ENCODE measurements at regions of chr3 and their contacts with region 1.

Region 1: DNA sequence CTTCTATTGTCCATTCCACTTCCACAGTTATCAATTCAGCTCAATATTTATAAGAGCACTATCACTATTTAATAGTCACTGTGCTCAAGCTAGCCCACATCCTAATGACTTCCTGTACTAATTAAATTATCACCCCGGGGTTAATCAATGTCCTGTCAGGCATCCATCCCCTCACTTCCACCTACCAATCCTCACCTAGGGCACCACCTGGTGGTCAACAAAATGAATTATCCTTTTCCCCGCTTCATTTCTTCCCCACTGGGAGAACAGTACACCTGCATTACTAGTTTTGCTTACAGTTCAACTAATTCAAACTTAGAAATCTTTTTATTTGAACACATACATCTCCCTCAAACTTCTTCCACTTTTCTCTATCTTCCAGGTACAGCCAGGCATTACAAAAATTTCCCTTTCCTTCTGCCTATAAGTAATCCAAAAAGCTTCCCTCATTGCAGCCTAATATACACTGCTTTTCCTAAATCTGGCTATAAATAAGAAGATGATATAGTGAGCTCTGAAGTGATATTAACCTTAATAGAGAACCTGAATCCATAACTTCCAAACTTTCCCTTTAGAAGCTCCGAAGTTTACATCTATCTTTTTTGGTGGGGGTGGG is 68.5 kb downstream of the TMCC1 start:
- DNase-seq: no peak
- H3K4me3 ChIP-seq: no peak overlapping the region
- H3K27ac ChIP-seq: no peak overlapping the region
- H3K4me1 ChIP-seq: no peaks in the 10 kb centered on the region
- H3K27me3 ChIP-seq: no peaks in the 10 kb centered on the region
- CTCF ChIP-seq: peak; percentile 41 to 63 (median 63)

Region 2: GRCh38 chr3:129469026-129469425 is 356.0 kb before region 1 on chr3:
- intact Hi-C with region 1: no loop called
- DNase-seq: no peak
- H3K4me3 ChIP-seq: no peak overlapping the region
- H3K27ac ChIP-seq: no peak overlapping the region
- H3K4me1 ChIP-seq: no peaks in the 10 kb centered on the region
- H3K27me3 ChIP-seq: no peaks in the 10 kb centered on the region
- CTCF ChIP-seq: no peak

Region 3: GRCh38 chr3:129650256-129650872 is 174.7 kb before region 1 on chr3:
- intact Hi-C with region 1: loop called (anchors 1 kb)
- DNase-seq: peak; percentile 12 to 90
- H3K4me3 ChIP-seq: no peak overlapping the region
- H3K27ac ChIP-seq: no peak overlapping the region
- H3K4me1 ChIP-seq: peaks cover 0 to 12% of the 10 kb centered on the region in 2 donors
- H3K27me3 ChIP-seq: no peaks in the 10 kb centered on the region
- CTCF ChIP-seq: peak; percentile 66 to 72 (median 69)

Region 4: GRCh38 chr3:129893581-129894070 is 68.6 kb after region 1 on chr3 and contains the start of gene TMCC1:
- intact Hi-C with region 1: loop called (anchors 5 kb)
- DNase-seq: peak; percentile 22 to 87
- H3K4me3 ChIP-seq: peak within 1 kb of the TSS; percentile 66 to 94
- H3K27ac ChIP-seq: peak within 1 kb of the TSS; percentile 83 to 94
- H3K4me1 ChIP-seq: peaks cover 4 to 7% of the 10 kb centered on the region in 2 donors
- H3K27me3 ChIP-seq: no peaks in the 10 kb centered on the region
- CTCF ChIP-seq: no peak
- total RNA-seq, gene TMCC1: 11.5 TPM

Region 5: GRCh38 chr3:129934234-129935123 is 109.4 kb after region 1 on chr3:
- intact Hi-C with region 1: loop called (anchors 5 kb)
- DNase-seq: no peak
- H3K4me3 ChIP-seq: peak overlapping the region in 1 of 2 donors; percentile 43
- H3K27ac ChIP-seq: no peak overlapping the region
- H3K4me1 ChIP-seq: no peaks in the 10 kb centered on the region
- H3K27me3 ChIP-seq: no peaks in the 10 kb centered on the region
- CTCF ChIP-seq: peak; percentile 81 to 91 (median 89)

Measured in ascending aorta (tissue), 2 donors.